GM12878 (cell line): ENCODE measurements at regions of chr3 and their contacts with region 1.

Region 1: GRCh38 chr3:174640932-174641331 is 218.2 kb upstream of the NAALADL2 start:
- DNase-seq: no peak
- ATAC-seq: no peak
- H3K4me3 ChIP-seq: no peak overlapping the region
- H3K27ac ChIP-seq: no peak overlapping the region
- H3K4me1 ChIP-seq: no peaks in the 10 kb centered on the region
- H3K27me3 ChIP-seq: no peaks in the 10 kb centered on the region
- CTCF ChIP-seq: no peak
- EP300 ChIP-seq: no peak
- POLR2A ChIP-seq: no peak
- RAD21 ChIP-seq: no peak

Region 2: DNA sequence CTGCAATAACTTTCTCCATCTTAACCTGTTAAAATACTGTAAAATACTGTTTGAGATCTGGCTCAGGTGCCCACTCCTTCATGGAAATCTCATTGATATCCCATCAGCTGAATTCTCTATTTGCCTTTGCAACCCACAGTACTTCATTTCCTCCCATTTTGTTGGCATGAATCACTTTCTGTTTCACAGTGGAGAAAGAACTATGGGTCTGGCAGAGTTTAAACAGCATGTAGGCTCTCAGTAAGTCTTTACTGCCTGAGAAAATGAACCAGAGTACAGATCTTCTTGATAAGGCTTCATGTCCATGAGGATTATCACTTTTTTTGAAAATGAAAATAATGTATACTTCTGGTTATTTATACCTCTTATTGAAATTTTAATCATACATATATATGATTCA is 464.1 kb after region 1 on chr3:
- CTCF ChIA-PET with region 1: no interaction called
- POLR2A ChIA-PET with region 1: interaction called, 11 read pairs
- RAD21 ChIA-PET with region 1: no interaction called
- SMC1A ChIA-PET with region 1: no interaction called
- in situ Hi-C with region 1: no loop called
- intact Hi-C with region 1: no loop called
- DNase-seq: no peak
- ATAC-seq: no peak
- H3K4me3 ChIP-seq: no peak overlapping the region
- H3K27ac ChIP-seq: no peak overlapping the region
- H3K4me1 ChIP-seq: no peaks in the 10 kb centered on the region
- H3K27me3 ChIP-seq: no peaks in the 10 kb centered on the region
- CTCF ChIP-seq: no peak
- EP300 ChIP-seq: no peak
- POLR2A ChIP-seq: no peak
- RAD21 ChIP-seq: no peak